PC-9 (cell line): ENCODE measurements at regions of chr2 and their contacts with region 1.

Region 1: GRCh38 chr2:85302121-85302520 is 25.7 kb downstream of the TGOLN2 start:
- DNase-seq: no peak
- H3K4me3 ChIP-seq: no peak overlapping the region
- H3K27ac ChIP-seq: no peak overlapping the region
- H3K4me1 ChIP-seq: no peaks in the 10 kb centered on the region
- H3K27me3 ChIP-seq: no peaks in the 10 kb centered on the region
- CTCF ChIP-seq: no peak

Region 2: GRCh38 chr2:85017411-85018048 is 284.6 kb before region 1 on chr2:
- CTCF ChIA-PET with region 1: interaction called, 12 read pairs
- POLR2A ChIA-PET with region 1: no interaction called
- intact Hi-C with region 1: no loop called
- DNase-seq: no peak
- H3K4me3 ChIP-seq: no peak overlapping the region
- H3K27ac ChIP-seq: peak overlapping the region; percentile 73; the same call in 1 of the 2 replicates
- H3K4me1 ChIP-seq: peaks cover 35% of the 10 kb centered on the region
- H3K27me3 ChIP-seq: no peaks in the 10 kb centered on the region
- CTCF ChIP-seq: peak; percentile 66

Region 3: GRCh38 chr2:85066874-85067351 is 235.2 kb before region 1 on chr2:
- CTCF ChIA-PET with region 1: interaction called, 7 read pairs
- POLR2A ChIA-PET with region 1: no interaction called
- intact Hi-C with region 1: loop called (anchors 1 kb)
- DNase-seq: peak; percentile 50 to 68
- H3K4me3 ChIP-seq: no peak overlapping the region
- H3K27ac ChIP-seq: no peak overlapping the region
- H3K4me1 ChIP-seq: no peaks in the 10 kb centered on the region
- H3K27me3 ChIP-seq: peaks cover 3% of the 10 kb centered on the region; the same call in 1 of the 2 replicates
- CTCF ChIP-seq: peak; percentile 93

Region 4: GRCh38 chr2:85132834-85133637 is 169.1 kb before region 1 on chr2 and contains the start of gene TCF7L1:
- CTCF ChIA-PET with region 1: no interaction called
- POLR2A ChIA-PET with region 1: no interaction called
- intact Hi-C with region 1: no loop called
- DNase-seq: peak in 1 of 2 experiments; percentile 67
- H3K4me3 ChIP-seq: peak within 1 kb of the TSS; percentile 62
- H3K27ac ChIP-seq: no peak within 1 kb of the TSS
- H3K4me1 ChIP-seq: peaks cover 7% of the 10 kb centered on the region
- H3K27me3 ChIP-seq: no peaks in the 10 kb centered on the region
- CTCF ChIP-seq: peak; percentile 72
- total RNA-seq, gene TCF7L1: 2.3 and 2.8 TPM in 2 replicates